Right cardiac atrium (tissue), 5 donors: ENCODE measurements at regions of chr10 and their contacts with region 1.

Region 1: DNA sequence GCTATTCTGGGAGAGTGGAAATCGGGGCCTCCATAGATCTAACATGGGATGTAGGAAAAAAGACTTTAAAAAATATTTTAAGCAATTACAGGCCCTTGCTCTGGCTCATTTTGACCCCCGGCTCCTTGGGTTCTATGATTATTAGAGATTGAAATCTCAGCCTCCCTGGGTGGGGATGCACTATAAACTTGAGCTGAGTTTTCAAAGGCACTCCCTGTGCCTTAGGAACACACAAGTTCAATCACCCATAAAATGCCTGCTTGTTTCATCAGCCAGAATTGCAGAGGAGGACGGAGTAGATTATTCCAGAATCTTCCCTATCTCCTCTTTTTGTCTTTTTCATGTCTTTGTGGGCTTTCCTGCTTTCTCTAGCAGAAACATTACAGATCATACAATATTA is 145.4 kb downstream of the CUBN start:
- DNase-seq: no peak
- ATAC-seq: no peak
- H3K4me3 ChIP-seq: no peak overlapping the region
- H3K27ac ChIP-seq: no peak overlapping the region
- H3K4me1 ChIP-seq: no peaks in the 10 kb centered on the region
- H3K27me3 ChIP-seq: no peaks in the 10 kb centered on the region

Region 2: GRCh38 chr10:16945593-16945992 is 38.6 kb before region 1 on chr10:
- intact Hi-C with region 1: loop called in 1 of 4 experiments (anchors 5 kb)
- DNase-seq: no peak
- ATAC-seq: no peak
- H3K4me3 ChIP-seq: no peak overlapping the region
- H3K27ac ChIP-seq: no peak overlapping the region
- H3K4me1 ChIP-seq: no peaks in the 10 kb centered on the region
- H3K27me3 ChIP-seq: no peaks in the 10 kb centered on the region

Region 3: DNA sequence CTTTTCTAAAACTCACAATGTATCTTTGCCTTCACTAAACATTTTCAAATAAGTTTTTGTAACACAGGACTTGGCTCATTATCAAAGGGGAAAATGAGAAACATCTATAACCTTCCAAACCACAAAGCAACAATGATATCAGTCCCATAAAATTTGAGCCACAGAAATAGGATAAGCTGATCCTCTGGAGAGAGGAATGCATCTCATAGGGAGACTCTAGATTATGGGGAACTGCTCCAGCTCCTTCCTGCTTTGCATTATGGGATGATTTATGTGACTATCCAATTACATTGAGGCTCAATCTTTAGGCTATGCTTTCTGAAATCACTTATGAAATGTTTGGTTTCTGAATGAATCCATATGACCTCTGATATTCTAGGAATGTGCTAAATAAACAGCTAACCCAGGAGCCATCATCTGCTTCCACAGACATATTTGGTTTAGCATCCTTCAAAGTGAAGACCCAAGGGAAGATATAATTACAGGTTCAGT is 75.0 kb after region 1 on chr10:
- intact Hi-C with region 1: no loop called
- DNase-seq: no peak
- ATAC-seq: no peak
- H3K4me3 ChIP-seq: no peak overlapping the region
- H3K27ac ChIP-seq: no peak overlapping the region
- H3K4me1 ChIP-seq: peaks cover 2% of the 10 kb centered on the region
- H3K27me3 ChIP-seq: no peaks in the 10 kb centered on the region